ENCODE measurements at regions of chr5 and their contacts with region 1.

Region 1: DNA sequence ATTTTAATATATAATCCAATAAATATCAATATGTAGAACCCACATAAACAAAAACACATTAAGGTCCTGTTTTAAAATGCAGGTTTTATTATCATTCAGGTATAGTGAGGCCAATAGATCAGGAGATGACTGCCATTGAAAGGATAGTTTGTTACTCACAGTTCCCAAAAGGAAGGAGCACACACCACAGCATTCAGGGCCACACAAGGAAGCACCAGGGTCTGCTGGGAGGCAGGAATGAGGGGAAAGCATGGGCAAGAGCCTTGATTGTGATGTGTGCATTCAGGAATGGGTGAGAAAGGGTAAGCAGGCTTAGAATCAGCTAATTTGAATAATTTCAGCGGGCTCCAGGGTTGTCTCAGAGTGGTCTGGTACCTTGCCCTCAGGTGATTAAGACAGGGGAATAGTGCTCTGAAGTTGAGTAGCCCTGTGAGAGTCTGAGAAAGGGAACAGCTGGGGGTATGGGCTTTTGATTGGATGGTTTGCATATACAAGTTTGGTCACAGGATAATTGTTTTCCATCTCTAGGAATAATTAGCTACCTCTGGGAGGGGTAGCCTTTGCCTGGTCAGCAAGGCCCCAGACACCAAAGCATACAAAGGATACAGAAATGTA is 19.8 kb upstream of the OTULIN start:
- DNase-seq: no peak
- H3K4me3 ChIP-seq: no peak overlapping the region
- CTCF ChIP-seq: no peak

Region 2: GRCh38 chr5:14364576-14365472 is 279.9 kb before region 1 on chr5:
- CTCF ChIA-PET with region 1: interaction called, 31 read pairs
- POLR2A ChIA-PET with region 1: interaction called, 3 read pairs
- DNase-seq: no peak
- H3K4me3 ChIP-seq: no peak overlapping the region
- CTCF ChIP-seq: peak; percentile 45

Region 3: DNA sequence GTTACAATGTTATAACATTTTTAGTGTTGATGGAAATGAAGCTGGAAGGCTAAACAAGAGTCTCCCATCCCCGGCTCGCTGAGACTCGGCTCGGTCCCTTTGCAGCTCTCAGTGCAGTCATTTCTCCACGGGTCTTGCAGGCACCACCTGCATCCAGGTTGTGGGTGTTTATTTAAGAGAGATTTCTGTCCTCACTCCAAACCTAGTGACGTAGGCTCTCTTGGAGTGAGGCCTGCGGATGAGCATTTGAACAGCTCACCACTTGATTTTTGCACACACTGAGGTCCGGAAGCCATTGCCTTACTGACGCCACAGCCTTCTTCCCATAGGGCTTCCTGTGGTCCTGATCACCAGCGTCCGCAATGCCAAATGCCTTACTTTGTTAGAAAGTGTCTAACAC is 260.8 kb before region 1 on chr5:
- CTCF ChIA-PET with region 1: interaction called, 27 read pairs
- POLR2A ChIA-PET with region 1: no interaction called
- DNase-seq: no peak
- H3K4me3 ChIP-seq: no peak overlapping the region
- CTCF ChIP-seq: no peak

Region 4: DNA sequence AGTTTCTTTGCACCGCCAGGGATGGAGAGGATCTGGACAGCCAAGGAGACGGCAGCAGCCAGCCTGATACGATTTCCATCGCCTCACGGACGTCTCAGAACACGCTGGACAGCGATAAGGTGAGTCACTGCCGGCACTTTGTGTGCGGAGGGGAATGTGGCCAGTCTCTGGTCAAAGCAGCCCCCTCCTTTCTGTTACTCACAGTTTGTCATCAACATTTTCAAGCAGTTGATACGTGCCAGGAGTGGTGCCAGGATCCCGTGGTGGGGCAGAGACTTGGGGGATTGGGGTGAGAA is 238.2 kb before region 1 on chr5:
- CTCF ChIA-PET with region 1: interaction called, 151 read pairs
- POLR2A ChIA-PET with region 1: no interaction called
- DNase-seq: peak; percentile 54
- H3K4me3 ChIP-seq: no peak overlapping the region
- CTCF ChIP-seq: no peak

Region 5: DNA sequence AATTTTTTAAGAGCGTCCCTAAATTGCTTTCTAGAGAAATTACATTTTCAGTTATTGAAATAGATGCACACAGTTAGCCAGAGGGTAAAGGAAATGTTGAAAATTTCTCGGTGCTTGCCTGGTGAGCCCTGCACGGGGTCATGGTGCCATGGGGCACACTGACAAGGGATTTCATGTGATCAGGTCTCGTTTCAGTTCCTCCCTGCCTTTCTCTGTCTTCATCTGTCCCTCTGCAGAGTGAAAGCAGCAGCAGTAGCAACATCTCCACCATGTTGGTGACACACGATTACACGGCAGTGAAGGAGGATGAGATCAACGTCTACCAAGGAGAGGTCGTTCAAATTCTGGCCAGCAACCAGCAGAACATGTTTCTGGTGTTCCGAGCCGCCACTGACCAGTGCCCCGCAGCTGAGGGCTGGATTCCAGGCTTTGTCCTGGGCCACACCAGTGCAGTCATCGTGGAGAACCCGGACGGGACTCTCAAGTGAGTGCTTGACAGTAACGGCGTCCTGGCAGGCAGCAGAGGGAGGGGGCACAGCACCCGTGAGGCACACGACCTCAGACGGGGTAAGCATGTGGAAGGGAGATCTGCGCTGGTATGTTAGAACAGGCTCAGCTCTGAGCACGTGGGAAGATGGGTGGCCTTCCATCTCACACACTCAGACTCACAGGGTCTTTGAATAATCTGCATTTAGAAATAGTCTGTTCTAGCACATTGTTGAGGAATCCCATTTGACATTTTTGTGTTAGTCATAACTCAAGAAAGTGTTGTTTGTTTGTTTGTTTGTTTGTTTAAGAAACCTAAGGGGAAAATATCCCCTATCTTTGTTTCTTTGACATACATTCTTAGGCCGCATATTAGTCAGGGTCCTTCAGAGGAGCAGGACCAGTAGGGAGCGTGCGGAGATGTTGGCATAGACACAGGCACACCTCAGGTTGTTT is 152.1 kb before region 1 on chr5:
- CTCF ChIA-PET with region 1: interaction called, 12 read pairs
- POLR2A ChIA-PET with region 1: no interaction called
- DNase-seq: no peak
- H3K4me3 ChIP-seq: no peak overlapping the region
- CTCF ChIP-seq: no peak

Region 6: GRCh38 chr5:14655146-14655741 is 10.5 kb after region 1 on chr5:
- CTCF ChIA-PET with region 1: interaction called, 63 read pairs
- POLR2A ChIA-PET with region 1: no interaction called
- DNase-seq: no peak
- H3K4me3 ChIP-seq: no peak overlapping the region
- CTCF ChIP-seq: no peak

Region 7: GRCh38 chr5:15013654-15014463 is 369.1 kb after region 1 on chr5:
- CTCF ChIA-PET with region 1: interaction called, 10 read pairs
- POLR2A ChIA-PET with region 1: no interaction called
- DNase-seq: no peak
- H3K4me3 ChIP-seq: no peak overlapping the region
- CTCF ChIP-seq: peak; percentile 32

Region 8: DNA sequence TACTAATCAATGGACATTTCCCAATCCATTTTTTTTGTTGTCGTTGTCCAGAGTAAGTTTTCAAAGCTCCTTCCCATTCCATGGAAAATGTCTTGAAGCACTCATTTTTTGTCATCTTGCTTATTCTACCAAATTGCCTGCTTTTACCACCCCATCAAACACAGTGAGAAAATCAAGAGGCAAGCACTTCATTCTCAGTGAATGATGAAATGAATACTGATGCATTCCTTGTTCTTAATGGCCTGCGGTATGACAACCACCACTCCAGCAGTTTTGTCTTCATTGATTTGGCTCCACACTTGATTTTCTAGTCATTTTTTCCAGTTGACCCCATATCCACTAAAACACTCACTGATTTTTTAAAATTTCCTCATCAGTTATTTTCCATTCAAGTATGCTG is 420.4 kb after region 1 on chr5:
- CTCF ChIA-PET with region 1: no interaction called
- POLR2A ChIA-PET with region 1: no interaction called
- DNase-seq: no peak
- H3K4me3 ChIP-seq: no peak overlapping the region
- CTCF ChIP-seq: no peak